Posterior vena cava (tissue), 2 donors: ENCODE measurements at regions of chr2 and their contacts with region 1.

Region 1: GRCh38 chr2:224628416-224628815 is 43.3 kb upstream of the CUL3 start:
- DNase-seq: no peak

Region 2: DNA sequence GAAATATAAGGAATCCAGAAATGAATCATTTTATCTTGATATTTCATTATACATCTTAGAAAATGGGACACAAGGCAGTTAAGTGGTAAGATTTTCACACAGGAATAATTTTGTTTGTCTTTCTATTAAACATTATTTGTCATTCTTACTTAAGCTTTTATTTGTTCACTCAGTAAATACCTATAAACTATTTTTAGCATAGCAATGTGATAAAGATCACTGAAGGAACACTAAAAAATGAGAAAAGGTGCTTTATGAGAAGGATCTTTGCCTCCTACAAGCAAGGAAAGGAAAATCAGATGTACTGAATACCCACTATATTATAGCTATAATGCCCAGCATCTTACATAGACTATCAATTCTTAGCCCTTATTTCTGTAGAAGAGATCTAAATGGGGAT is 594.9 kb after region 1 on chr2:
- intact Hi-C with region 1: loop called in 1 of 2 experiments (anchors 5 kb)
- DNase-seq: no peak